ENCODE measurements at regions of chr6 and their contacts with region 1.

Region 1: GRCh38 chr6:85660181-85660611 is 17.5 kb upstream of the SYNCRIP start:
- DNase-seq: peak; percentile 40
- H3K4me3 ChIP-seq: no peak overlapping the region
- H3K27ac ChIP-seq: no peak overlapping the region
- H3K4me1 ChIP-seq: peaks cover 6% of the 10 kb centered on the region
- H3K27me3 ChIP-seq: no peaks in the 10 kb centered on the region
- CTCF ChIP-seq: 0 out of 2 replicates have a peak, but pooled peaks have one; percentile 13

Region 2: DNA sequence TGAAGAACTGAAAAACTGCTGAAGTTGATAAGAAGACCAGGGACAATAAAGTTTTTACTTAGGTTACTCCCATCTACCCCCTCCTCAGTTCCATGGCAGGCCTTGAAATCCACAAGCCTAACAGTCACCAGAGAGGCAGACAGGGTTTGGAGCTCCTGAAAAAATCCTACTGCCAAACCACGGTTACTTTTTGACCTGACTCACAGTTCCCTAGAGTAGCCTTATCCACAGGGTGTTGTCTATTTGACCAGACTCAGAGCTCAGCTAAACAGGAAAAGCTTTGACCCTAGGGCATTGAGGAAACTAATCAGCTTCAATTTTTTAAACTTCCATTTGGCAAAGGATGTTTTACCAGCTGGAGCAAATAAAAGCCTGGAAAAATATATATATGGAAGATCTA is 468.0 kb before region 1 on chr6:
- CTCF ChIA-PET with region 1: no interaction called
- POLR2A ChIA-PET with region 1: interaction called, 15 read pairs
- intact Hi-C with region 1: no loop called
- DNase-seq: no peak
- H3K4me3 ChIP-seq: no peak overlapping the region
- H3K27ac ChIP-seq: no peak overlapping the region
- H3K4me1 ChIP-seq: no peaks in the 10 kb centered on the region
- H3K27me3 ChIP-seq: peaks cover 3% of the 10 kb centered on the region
- CTCF ChIP-seq: no peak

Measured in A673 (cell line).